ENCODE measurements at regions of chr17 and their contacts with region 1.

Region 1: DNA sequence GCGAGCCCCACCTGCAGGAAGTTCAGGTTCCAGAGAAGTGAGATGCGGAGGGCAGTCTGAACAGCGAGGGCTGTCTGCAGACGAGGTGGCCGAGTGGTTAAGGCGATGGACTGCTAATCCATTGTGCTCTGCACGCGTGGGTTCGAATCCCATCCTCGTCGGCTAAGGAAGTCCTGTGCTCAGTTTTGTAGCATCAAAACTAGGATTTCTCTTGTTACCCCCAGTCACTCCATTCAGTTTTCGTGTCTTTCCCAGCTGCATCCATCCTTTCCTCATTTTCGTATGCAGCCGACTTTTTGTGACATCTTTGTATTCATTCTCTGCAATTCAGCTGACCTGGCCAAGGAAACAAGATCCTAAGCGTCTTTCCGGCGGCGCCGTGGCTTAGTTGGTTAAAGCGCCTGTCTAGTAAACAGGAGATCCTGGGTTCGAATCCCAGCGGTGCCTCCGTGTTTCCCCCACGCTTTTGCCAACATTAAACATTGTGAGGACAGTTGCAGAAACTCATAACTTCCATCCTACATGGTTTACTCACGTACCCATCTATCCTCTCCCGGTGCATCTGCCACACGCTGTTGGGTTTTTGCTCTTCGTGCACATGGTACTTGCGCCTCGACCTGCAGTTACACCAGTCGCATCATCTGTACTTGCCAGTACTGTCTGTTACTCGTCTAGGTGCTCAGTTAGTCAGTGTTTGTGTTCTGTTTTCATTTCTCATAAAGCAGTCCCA is 3.0 kb downstream of the BORCS6 start:
- DNase-seq: peak in 1 of 2 donors; percentile 97
- H3K4me3 ChIP-seq: peak overlapping the region; percentile 77 to 86
- H3K27ac ChIP-seq: peak overlapping the region; percentile 100
- H3K4me1 ChIP-seq: peaks cover 40% of the 10 kb centered on the region
- H3K27me3 ChIP-seq: no peaks in the 10 kb centered on the region
- CTCF ChIP-seq: peak in 1 of 3 experiments; percentile 29
- POLR2A ChIP-seq: no peak

Region 2: GRCh38 chr17:8119581-8120519 is 67.1 kb before region 1 on chr17:
- intact Hi-C with region 1: loop called (anchors 2 kb)
- DNase-seq: no peak
- H3K4me3 ChIP-seq: peak overlapping the region; percentile 50 to 76
- H3K27ac ChIP-seq: peak overlapping the region; percentile 98
- H3K4me1 ChIP-seq: peaks cover 66% of the 10 kb centered on the region
- H3K27me3 ChIP-seq: no peaks in the 10 kb centered on the region
- CTCF ChIP-seq: no peak
- POLR2A ChIP-seq: no peak

Region 3: GRCh38 chr17:8222630-8223356 is 35.8 kb after region 1 on chr17:
- intact Hi-C with region 1: loop called (anchors 2 kb)
- DNase-seq: peak in 1 of 2 donors; percentile 98
- H3K4me3 ChIP-seq: peak overlapping the region; percentile 56 to 76
- H3K27ac ChIP-seq: peak overlapping the region; percentile 96
- H3K4me1 ChIP-seq: peaks cover 32% of the 10 kb centered on the region
- H3K27me3 ChIP-seq: no peaks in the 10 kb centered on the region
- CTCF ChIP-seq: no peak
- POLR2A ChIP-seq: peak in 1 of 2 donors; percentile 75

Region 4: DNA sequence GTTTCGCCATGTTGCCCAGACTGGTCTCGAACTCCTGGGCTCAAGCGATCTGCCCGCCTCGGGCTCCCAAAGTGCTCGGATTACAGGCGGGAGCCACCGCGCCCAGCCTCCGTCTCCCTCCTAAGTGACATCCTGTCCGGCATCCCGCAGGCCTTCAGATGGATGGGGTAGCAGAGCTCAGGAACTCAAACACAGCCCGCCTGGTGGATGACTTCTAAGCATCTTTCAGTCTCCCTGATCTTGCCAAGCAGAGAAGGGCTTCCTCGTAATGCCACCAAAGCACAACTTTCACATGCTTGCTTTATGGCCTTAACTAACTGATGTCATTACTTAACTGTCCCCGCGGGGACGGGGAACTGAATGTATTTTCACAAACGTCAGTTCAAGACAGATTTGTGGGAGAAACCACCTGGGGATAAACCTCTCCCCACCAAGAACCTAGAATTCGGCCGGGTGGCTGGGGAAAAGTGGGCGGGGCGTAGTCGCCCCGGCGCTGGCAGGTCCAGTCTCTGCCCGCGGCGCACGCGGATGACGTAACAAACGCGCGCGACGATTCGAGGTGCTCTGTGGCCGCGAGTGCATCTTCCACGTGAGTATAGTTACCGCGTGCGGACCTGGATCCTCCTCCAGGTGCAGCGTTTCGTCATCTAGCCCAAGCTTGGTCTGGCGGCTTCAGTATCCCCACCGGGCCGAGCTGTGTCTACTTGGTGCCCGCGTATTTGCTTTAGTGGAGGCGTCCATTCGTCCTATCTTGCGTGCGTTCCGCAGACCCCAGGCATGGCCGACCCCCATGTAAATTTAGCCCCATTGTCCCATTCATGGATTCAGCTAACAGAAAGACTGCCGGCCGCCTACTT is 62.0 kb after region 1 on chr17 and contains the start of gene PFAS:
- intact Hi-C with region 1: loop called (anchors 2 kb)
- DNase-seq: peak in 1 of 2 donors; percentile 95
- H3K4me3 ChIP-seq: peak within 1 kb of the TSS; percentile 85 to 89
- H3K27ac ChIP-seq: peak within 1 kb of the TSS; percentile 98
- H3K4me1 ChIP-seq: peaks cover 10% of the 10 kb centered on the region
- H3K27me3 ChIP-seq: no peaks in the 10 kb centered on the region
- CTCF ChIP-seq: no peak
- POLR2A ChIP-seq: peak in 1 of 2 donors; percentile 33
- total RNA-seq, gene PFAS: 36.3 TPM